ENCODE measurements at regions of chr6 and their contacts with region 1.

Region 1: DNA sequence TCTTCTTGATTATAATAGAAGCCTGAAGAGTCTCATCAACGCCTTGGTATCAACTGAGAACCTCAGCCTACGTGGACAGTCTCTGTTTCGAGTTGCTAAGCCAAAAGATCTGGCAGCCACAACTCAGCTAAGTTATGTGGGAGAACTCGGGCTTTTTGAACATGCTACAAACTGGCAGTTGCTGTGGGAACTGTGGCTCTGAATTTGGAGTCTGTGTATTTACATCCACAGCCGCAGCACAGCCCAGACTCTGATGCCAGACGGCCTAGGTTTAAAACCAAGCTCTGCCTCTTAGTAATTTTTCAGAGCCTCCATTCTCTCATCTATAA is 35.8 kb downstream of the RIPOR2 start:
- DNase-seq: no peak
- ATAC-seq: no peak
- H3K4me3 ChIP-seq: no peak overlapping the region
- H3K27ac ChIP-seq: no peak overlapping the region
- H3K4me1 ChIP-seq: peaks cover 9% of the 10 kb centered on the region
- H3K27me3 ChIP-seq: no peaks in the 10 kb centered on the region
- CTCF ChIP-seq: no peak
- POLR2A ChIP-seq: no peak
- RAD21 ChIP-seq: no peak

Region 2: DNA sequence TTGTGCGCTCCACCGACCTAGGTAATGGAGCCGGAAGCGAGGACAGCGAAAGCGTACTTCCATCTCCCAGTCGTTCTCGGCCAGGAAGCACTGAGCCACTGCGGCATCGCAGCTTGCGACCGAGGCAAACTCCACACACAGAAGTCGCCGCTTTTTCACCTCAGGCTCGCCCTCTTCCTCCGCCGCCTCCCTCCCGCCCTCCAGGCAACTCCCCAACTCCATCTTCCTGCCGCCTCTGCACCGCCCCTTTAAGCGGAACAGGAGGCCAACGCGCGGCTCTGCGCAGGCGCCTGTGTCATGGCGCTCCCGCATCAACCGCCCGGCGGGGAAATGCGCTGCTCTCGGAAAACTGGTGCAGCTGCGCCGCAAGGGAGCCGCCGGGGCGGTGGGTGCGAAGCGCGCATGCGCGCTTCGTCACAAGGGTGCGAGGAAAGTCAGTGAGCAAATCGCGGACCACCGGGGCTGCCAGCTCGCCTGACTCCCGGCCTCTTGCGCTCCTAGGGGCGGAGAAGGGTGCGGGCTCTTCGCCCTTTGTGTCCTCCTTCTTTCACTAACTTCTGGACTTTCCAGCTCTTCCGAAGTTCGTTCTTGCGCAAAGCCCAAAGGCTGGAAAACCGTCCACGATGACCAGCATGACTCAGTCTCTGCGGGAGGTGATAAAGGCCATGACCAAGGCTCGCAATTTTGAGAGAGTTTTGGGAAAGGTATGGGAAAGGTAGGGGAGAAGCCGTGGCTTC is 233.2 kb before region 1 on chr6 and contains the starts of genes ACOT13 and TDP2:
- CTCF ChIA-PET with region 1: no interaction called
- POLR2A ChIA-PET with region 1: no interaction called
- dilution Hi-C with region 1: no loop called
- in situ Hi-C with region 1: no loop called
- intact Hi-C with region 1: no loop called
- DNase-seq: peak; percentile 96
- ATAC-seq: peak; percentile 98
- H3K4me3 ChIP-seq: peak within 1 kb of the TSS; percentile 81
- H3K27ac ChIP-seq: peak within 1 kb of the TSS; percentile 91
- H3K4me1 ChIP-seq: peaks cover 2% of the 10 kb centered on the region; the same call in 1 of the 2 replicates
- H3K27me3 ChIP-seq: no peaks in the 10 kb centered on the region
- CTCF ChIP-seq: peak; percentile 55
- POLR2A ChIP-seq: peak; percentile 73
- RAD21 ChIP-seq: peak; percentile 48
- total RNA-seq, gene ACOT13: 3.6 and 8.1 TPM in 2 replicates
- total RNA-seq, gene TDP2: 13.6 and 25.8 TPM in 2 replicates

Region 3: GRCh38 chr6:24883618-24884017 is 16.3 kb before region 1 on chr6:
- CTCF ChIA-PET with region 1: interaction called, 11 read pairs
- POLR2A ChIA-PET with region 1: no interaction called
- dilution Hi-C with region 1: no loop called
- in situ Hi-C with region 1: no loop called
- intact Hi-C with region 1: loop called (anchors 2 kb)
- DNase-seq: peak; percentile 93
- ATAC-seq: peak; percentile 60
- H3K4me3 ChIP-seq: no peak overlapping the region; the same call in 1 of the 2 replicates
- H3K27ac ChIP-seq: no peak overlapping the region; the same call in 1 of the 2 replicates
- H3K4me1 ChIP-seq: peaks cover 16% of the 10 kb centered on the region
- H3K27me3 ChIP-seq: no peaks in the 10 kb centered on the region
- CTCF ChIP-seq: no peak
- POLR2A ChIP-seq: no peak
- RAD21 ChIP-seq: no peak

Region 4: DNA sequence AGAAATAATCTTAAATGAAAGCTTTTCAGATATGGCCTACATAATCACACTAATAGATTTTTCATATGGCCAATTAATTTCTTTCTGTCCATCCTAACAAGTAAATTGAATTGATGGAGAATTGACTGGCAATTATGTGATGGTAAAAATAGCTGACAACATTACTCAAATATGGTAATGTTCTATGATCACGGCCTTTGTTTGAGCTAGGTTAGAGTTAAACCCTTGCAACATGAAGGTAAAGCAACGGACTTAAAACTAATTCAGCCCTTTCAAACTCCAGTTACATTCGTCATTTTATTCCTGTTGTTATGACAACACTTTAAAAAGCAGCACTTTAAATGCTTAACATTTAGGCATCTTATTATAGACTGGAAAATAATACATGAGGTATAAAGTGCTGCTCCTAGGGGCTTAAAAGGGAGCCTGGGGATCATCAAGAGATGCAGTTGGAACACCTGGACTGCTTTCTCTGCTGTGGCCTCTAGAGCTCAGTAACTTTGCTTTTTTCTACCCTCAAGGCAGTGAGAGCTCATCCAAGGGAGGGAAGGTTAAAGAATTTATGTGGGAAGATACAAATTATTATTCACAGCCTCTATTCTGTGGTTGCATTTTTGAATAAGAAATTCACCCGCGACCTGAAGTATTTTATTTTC is 11.1 kb before region 1 on chr6:
- CTCF ChIA-PET with region 1: interaction called, 11 read pairs
- POLR2A ChIA-PET with region 1: no interaction called
- dilution Hi-C with region 1: no loop called
- in situ Hi-C with region 1: no loop called
- intact Hi-C with region 1: no loop called
- DNase-seq: no peak
- ATAC-seq: no peak
- H3K4me3 ChIP-seq: no peak overlapping the region
- H3K27ac ChIP-seq: no peak overlapping the region
- H3K4me1 ChIP-seq: 0 out of 2 replicates have a peak, but pooled peaks cover 3% of the 10 kb centered on the region
- H3K27me3 ChIP-seq: no peaks in the 10 kb centered on the region
- CTCF ChIP-seq: no peak
- POLR2A ChIP-seq: no peak
- RAD21 ChIP-seq: no peak

Measured in IMR-90 (cell line).